Panc1 (cell line): ENCODE measurements at regions of chr9 and their contacts with region 1.

Region 1: DNA sequence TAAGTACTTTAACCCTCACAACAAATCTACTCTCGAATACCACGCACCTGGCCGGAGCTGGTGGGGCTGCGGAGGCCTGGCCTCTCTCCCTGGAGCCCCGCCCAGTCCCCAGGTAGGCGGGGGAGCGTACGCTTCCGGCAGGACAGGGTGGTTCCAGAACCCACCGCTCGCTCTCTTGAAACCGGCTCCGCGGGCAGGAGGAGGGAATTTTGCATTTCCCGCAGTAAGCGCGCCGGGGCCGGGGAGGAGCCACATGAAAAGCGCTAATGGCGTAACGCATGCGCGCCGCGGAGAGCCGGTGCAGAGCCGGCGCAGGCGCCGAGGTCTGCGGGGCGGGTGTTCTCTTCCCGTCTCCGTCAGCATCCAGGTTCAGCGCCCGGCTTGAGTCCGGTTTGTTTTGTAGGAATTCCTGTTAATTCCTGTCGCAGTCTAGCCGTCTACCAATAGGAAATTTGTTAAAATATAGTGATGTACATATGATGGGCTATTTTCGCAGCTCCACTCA is 20.8 kb downstream of the CAVIN4 start:
- DNase-seq: no peak
- ATAC-seq: peak; percentile 83
- H3K4me3 ChIP-seq: peak overlapping the region; percentile 59 to 69
- H3K27ac ChIP-seq: peak overlapping the region; percentile 72; the same call in 1 of the 2 replicates
- H3K4me1 ChIP-seq: no peaks in the 10 kb centered on the region
- H3K27me3 ChIP-seq: no peaks in the 10 kb centered on the region
- CTCF ChIP-seq: no peak

Region 2: DNA sequence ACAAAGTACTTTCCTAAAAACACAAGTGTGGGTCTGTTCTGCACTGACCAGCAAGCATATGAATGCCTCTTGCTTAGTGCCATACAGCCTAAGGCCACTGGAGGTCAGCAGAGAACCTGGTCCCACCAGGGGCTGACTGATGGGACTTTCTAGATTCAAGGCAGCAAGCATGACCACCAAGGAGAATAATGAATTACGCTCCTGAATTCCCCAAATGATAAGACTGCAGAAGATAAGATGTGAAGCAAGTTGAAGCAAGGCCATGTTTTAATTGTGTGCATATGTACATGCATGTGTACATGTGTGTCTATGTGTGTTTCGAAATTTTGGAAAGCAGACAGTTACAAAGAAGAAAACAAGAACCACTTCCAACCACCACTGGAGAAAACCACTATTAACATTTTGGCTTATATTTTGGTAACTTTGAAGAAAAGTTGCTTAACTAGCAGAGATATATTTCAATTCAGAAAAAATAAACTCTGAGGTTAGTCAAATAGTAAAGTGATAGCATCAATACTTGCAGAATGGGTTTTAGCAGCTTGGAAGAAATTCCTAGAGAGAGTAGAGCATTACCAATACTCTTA is 570.4 kb before region 1 on chr9:
- CTCF ChIA-PET with region 1: no interaction called
- POLR2A ChIA-PET with region 1: no interaction called
- in situ Hi-C with region 1: no loop called
- intact Hi-C with region 1: loop called (anchors 10 kb)
- DNase-seq: peak; percentile 72
- ATAC-seq: peak; percentile 95
- H3K4me3 ChIP-seq: no peak overlapping the region
- H3K27ac ChIP-seq: no peak overlapping the region
- H3K4me1 ChIP-seq: no peaks in the 10 kb centered on the region
- H3K27me3 ChIP-seq: no peaks in the 10 kb centered on the region
- CTCF ChIP-seq: peak; percentile 88

Region 3: DNA sequence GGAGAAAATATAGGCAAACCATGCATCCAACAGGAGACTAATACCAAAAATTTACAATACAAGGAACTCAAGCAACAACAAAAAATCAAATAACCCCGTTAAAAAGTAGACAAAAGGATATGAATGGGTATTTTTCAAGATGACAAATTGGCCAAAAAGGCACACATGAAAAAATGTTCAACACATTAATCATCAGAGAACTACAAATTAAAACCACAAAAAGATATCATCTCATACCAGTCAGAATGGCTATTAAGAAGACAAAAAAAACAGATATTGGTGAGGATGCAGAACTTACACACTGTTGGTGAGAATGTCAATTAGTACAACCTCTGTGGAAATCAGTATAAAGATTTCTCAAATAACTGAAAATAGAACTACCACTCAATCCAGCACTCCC is 281.0 kb before region 1 on chr9:
- CTCF ChIA-PET with region 1: no interaction called
- POLR2A ChIA-PET with region 1: no interaction called
- in situ Hi-C with region 1: no loop called
- intact Hi-C with region 1: loop called (anchors 10 kb)
- DNase-seq: no peak
- ATAC-seq: no peak
- H3K4me3 ChIP-seq: no peak overlapping the region
- H3K27ac ChIP-seq: no peak overlapping the region
- H3K4me1 ChIP-seq: no peaks in the 10 kb centered on the region
- H3K27me3 ChIP-seq: no peaks in the 10 kb centered on the region
- CTCF ChIP-seq: no peak

Region 4: GRCh38 chr9:100698945-100699344 is 100.3 kb after region 1 on chr9:
- CTCF ChIA-PET with region 1: interaction called, 3 read pairs
- POLR2A ChIA-PET with region 1: no interaction called
- in situ Hi-C with region 1: no loop called
- intact Hi-C with region 1: loop called (anchors 5 kb)
- DNase-seq: no peak
- ATAC-seq: no peak
- H3K4me3 ChIP-seq: no peak overlapping the region
- H3K27ac ChIP-seq: no peak overlapping the region
- H3K4me1 ChIP-seq: no peaks in the 10 kb centered on the region
- H3K27me3 ChIP-seq: no peaks in the 10 kb centered on the region
- CTCF ChIP-seq: no peak

Region 5: GRCh38 chr9:101311758-101312420 is 713.2 kb after region 1 on chr9:
- CTCF ChIA-PET with region 1: interaction called, 23 read pairs
- POLR2A ChIA-PET with region 1: no interaction called
- in situ Hi-C with region 1: no loop called
- intact Hi-C with region 1: loop called (anchors 1 kb)
- DNase-seq: peak; percentile 38
- ATAC-seq: peak; percentile 78
- H3K4me3 ChIP-seq: no peak overlapping the region
- H3K27ac ChIP-seq: no peak overlapping the region
- H3K4me1 ChIP-seq: no peaks in the 10 kb centered on the region
- H3K27me3 ChIP-seq: no peaks in the 10 kb centered on the region
- CTCF ChIP-seq: peak; percentile 42; the same call in 1 of the 2 replicates